GM13977 (cell line): ENCODE measurements at regions of chr13 and their contacts with region 1.

Region 1: DNA sequence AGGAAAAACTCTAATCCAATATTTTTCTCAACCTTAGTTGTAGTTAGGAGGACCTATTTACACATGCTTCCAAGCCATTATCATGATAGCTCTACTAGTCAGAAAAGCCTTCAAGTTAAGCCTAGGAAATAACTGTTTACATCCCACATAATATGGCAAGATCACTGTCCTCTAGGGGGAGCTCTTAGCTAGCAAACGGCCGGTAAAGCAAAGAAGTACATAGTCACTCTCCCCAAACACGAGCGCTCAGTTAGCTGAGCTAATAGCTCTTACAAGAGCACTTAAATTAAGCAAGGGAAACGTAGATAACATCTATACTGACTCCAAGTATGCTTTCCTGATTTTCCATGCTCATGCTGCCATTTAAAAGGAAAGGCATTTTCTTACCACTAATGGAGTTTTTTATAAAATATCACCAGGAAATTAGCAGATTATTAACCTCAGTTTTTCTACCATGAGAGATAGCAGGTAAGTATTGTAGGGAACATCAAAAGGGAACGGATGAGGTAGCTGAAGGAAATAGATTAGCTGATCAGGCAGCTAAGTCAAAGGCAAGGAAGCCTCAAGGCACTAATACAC is 100.6 kb upstream of the PABPC3 start:
- DNase-seq: peak; percentile 76
- CTCF ChIP-seq: peak; percentile 88

Region 2: DNA sequence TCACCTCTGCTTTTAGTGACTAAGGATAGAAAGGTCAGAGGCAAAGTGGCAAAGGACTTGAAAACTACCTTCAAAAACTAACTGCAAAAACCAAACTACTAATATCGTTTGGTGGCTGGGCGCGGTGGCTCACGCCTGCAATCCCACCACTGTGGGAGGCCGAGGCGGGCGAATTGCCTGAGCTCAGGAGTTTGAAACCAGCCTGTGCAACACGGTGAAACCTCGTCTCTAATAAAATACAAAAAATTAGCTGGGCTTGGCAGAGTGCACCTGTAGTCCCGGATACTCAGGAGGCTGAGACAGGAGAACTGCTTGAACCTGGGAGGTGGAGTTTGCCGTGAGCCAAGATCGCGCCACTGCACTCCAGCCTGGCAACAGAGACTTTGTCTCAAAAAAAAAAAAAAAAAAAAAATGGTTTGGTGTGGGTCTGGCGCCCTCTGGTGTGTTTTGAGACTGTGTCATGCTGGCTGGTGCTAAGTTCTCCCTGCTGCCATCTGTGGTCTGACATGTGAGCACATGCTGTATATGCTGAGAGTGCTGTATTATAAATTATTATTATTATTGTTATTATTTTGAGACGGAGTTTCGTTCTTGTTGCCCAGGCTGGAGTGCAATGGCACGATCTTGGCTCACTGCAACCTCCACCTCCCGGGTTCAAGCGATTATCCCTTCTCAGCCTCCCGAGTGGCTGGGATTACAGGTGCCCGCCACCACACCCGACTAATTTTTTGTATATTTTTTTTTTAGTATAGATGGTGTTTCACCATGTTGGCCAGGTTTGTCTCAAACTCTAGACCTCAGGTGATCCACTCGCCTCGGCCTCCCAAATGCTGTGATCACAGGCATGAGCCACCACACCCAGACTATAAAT is 267.3 kb before region 1 on chr13:
- in situ Hi-C with region 1: loop called (anchors 25 kb)
- DNase-seq: peak; percentile 90
- CTCF ChIP-seq: peak; percentile 77

Region 3: DNA sequence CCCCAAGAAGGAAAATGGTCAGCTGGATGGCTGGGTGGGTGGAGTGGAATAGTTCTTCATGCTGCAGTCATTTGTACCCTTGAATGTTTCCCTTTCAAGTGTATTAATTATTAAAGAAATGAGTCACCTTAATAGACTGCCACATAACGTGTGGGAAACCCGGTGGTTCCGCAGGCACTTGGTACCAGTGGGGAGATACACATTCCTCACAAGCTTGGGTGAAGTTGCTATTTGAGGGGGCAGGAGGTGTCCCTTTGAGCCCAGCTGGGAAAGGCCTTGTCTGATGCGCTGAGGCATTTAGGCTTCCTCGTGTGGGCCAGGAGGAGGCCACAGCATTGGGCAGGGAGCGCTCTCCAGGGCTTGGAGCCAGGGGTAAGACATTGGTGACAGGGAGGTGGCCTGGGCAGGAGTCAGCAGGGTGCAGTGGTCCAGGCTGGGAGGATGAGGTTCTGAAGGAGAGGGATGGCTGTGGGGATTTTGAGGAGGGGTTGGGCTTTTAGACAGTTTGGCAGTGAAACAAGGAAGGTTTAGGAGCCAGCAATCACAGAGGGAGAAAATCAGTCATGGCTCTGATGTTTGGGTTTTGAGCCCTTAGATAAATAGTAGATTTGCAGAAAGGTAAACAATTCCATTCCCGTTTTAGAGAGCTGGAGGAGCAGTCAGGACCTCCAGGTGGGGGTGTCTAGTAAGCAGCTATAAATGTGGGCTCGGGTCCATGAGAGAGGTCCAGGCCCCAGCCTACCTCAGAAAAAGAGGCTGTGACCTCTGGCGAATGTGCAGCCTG is 434.3 kb after region 1 on chr13:
- in situ Hi-C with region 1: no loop called
- DNase-seq: no peak
- CTCF ChIP-seq: no peak